HEK293 (cell line): ENCODE measurements at regions of chr9 and their contacts with region 1.

Region 1: GRCh38 chr9:5586391-5586802 is 42.5 kb upstream of the RIC1 start:
- H3K4me3 ChIP-seq: no peak overlapping the region
- H3K27ac ChIP-seq: no peak overlapping the region
- H3K4me1 ChIP-seq: no peaks in the 10 kb centered on the region
- CTCF ChIP-seq: no peak

Region 2: GRCh38 chr9:5186416-5187169 is 399.8 kb before region 1 on chr9:
- CTCF ChIA-PET with region 1: interaction called, 12 read pairs
- POLR2A ChIA-PET with region 1: no interaction called
- H3K4me3 ChIP-seq: no peak overlapping the region
- H3K27ac ChIP-seq: no peak overlapping the region
- H3K4me1 ChIP-seq: no peaks in the 10 kb centered on the region
- CTCF ChIP-seq: peak; percentile 73; the same call in 1 of the 2 replicates

Region 3: DNA sequence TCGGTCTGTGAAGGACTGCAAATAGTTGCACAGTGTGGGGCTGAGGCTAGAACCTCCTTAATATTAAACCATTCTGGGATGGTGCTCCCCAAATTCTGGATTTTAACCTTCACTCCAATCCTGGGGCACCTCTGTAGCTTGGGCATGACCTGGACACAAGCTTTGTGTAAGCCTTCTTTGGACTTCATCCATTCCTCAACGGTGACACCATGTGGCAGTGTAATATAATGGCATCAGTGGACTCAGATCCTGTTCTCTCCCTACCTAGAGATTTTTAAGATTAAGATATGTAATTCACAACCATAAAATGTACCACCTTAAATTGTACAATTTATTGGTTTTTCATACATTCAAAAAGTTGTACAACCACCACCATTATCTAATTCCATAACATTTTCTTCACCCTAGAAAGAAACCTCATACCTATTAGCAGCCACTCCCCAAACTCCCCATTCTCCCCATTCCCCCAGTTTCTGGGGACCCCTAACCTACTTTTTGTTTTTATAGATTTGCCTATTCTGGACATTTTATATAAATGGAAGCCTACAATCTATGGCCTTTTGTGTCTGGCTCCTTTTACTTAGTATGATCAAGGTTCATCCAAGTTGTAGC is 143.9 kb before region 1 on chr9:
- CTCF ChIA-PET with region 1: interaction called, 13 read pairs
- POLR2A ChIA-PET with region 1: no interaction called
- H3K4me3 ChIP-seq: no peak overlapping the region
- H3K27ac ChIP-seq: no peak overlapping the region
- H3K4me1 ChIP-seq: no peaks in the 10 kb centered on the region
- CTCF ChIP-seq: no peak

Region 4: GRCh38 chr9:5450359-5451091 is 135.9 kb before region 1 on chr9 and contains the start of gene CD274:
- CTCF ChIA-PET with region 1: interaction called, 26 read pairs
- POLR2A ChIA-PET with region 1: no interaction called
- H3K4me3 ChIP-seq: peak within 1 kb of the TSS; percentile 32
- H3K27ac ChIP-seq: no peak within 1 kb of the TSS
- H3K4me1 ChIP-seq: no peaks in the 10 kb centered on the region
- CTCF ChIP-seq: peak; percentile 83

Region 5: GRCh38 chr9:5532790-5533189 is 53.6 kb before region 1 on chr9:
- CTCF ChIA-PET with region 1: interaction called, 12 read pairs
- POLR2A ChIA-PET with region 1: no interaction called
- H3K4me3 ChIP-seq: no peak overlapping the region
- H3K27ac ChIP-seq: no peak overlapping the region
- H3K4me1 ChIP-seq: no peaks in the 10 kb centered on the region
- CTCF ChIP-seq: no peak

Region 6: DNA sequence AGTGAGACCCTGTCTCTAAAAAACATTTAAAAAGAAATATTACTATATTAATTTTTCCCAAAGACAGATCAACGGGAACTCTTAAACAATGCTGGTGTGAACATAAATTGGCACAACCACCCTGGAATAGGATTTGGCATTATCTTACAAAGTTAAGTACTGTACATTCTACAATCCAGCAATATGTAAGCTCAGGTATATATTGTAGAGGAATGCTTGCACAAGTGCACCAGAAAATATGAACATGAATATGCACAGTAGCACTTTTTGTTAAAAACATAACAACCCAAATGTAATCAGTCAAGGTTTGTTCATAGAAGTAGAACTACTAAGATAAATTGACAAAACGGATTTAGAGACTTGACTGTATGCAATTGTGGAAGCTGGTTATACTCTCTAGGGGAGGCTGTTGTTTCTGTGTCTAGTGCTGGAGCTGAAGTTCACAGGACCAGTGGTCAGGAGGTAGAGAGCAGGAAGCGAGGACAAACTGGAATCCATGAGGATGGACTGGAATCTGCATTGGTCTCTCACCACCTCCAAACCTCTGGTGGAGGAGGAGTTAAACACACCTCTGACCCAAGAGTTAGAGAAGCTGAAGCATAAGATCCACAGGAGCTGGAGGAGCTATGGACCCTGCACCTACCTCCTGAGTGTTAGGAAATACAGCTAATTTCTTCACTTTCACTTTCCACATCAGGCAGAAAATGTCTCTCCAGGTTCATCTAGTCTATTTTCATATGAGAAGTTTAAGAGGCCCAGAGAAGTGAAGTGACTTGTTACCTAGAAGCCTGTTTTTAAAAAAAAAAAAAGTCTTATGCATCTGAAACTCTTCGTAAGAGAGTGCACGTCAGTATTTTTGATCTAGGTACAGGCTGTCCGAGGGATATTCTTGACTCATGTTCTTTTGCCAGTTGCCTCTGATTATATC is 22.2 kb after region 1 on chr9:
- CTCF ChIA-PET with region 1: interaction called, 10 read pairs
- POLR2A ChIA-PET with region 1: no interaction called
- H3K4me3 ChIP-seq: no peak overlapping the region; the same call in 1 of the 2 replicates
- H3K27ac ChIP-seq: no peak overlapping the region
- H3K4me1 ChIP-seq: no peaks in the 10 kb centered on the region
- CTCF ChIP-seq: no peak

Region 7: GRCh38 chr9:5650356-5651105 is 64.1 kb after region 1 on chr9:
- CTCF ChIA-PET with region 1: no interaction called
- POLR2A ChIA-PET with region 1: no interaction called
- H3K4me3 ChIP-seq: no peak overlapping the region
- H3K27ac ChIP-seq: no peak overlapping the region
- H3K4me1 ChIP-seq: no peaks in the 10 kb centered on the region
- CTCF ChIP-seq: no peak